Heart left ventricle (tissue), 16 donors: ENCODE measurements at regions of chr2 and their contacts with region 1.

Region 1: GRCh38 chr2:156400706-156401678 is 35.2 kb upstream of the GPD2 start:
- DNase-seq: peak; percentile 55 to 78 (median 72)
- ATAC-seq: peak; percentile 85 to 92 (median 90)
- H3K4me3 ChIP-seq: peak overlapping the region; percentile 66 to 93 (median 76)
- H3K27ac ChIP-seq: peak overlapping the region; percentile 80 to 97 (median 92)
- H3K4me1 ChIP-seq: peaks cover 0 to 25% (median 5%) of the 10 kb centered on the region in 12 donors
- H3K27me3 ChIP-seq: no peaks in the 10 kb centered on the region
- CTCF ChIP-seq: peak in 1 of 12 donors; percentile 1
- POLR2A ChIP-seq: no peak

Region 2: GRCh38 chr2:156192468-156192867 is 208.5 kb before region 1 on chr2:
- intact Hi-C with region 1: loop called in 1 of 10 experiments (anchors 10 kb)
- DNase-seq: no peak
- ATAC-seq: no peak
- H3K4me3 ChIP-seq: no peak overlapping the region
- H3K27ac ChIP-seq: no peak overlapping the region
- H3K4me1 ChIP-seq: peaks cover 0 to 4% (median 0%) of the 10 kb centered on the region in 12 donors
- H3K27me3 ChIP-seq: no peaks in the 10 kb centered on the region
- CTCF ChIP-seq: peak in 10 of 12 donors; percentile 10 to 48 (median 30)
- POLR2A ChIP-seq: no peak

Region 3: DNA sequence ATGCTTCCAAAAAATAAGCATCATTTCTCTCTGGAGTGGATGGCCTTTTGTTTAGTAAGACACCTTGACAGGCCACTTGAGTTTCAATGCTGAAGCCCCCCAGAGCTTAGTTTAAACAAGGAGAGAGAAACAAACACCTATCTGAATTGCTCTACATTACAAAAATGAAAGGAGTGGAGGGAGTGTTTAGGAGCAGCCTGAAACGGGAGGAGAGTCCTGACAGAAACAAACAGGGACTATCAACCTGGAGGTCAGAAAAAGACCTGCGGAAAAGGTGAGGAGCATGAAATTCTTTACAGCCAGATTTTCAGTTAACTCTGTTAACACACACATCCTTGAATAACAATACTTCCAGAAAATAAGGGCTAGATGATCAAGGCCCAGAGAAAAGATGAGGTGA is 194.6 kb before region 1 on chr2:
- intact Hi-C with region 1: loop called in 1 of 10 experiments (anchors 10 kb)
- DNase-seq: no peak
- ATAC-seq: no peak
- H3K4me3 ChIP-seq: no peak overlapping the region
- H3K27ac ChIP-seq: no peak overlapping the region
- H3K4me1 ChIP-seq: no peaks in the 10 kb centered on the region
- H3K27me3 ChIP-seq: no peaks in the 10 kb centered on the region
- CTCF ChIP-seq: no peak
- POLR2A ChIP-seq: no peak

Region 4: DNA sequence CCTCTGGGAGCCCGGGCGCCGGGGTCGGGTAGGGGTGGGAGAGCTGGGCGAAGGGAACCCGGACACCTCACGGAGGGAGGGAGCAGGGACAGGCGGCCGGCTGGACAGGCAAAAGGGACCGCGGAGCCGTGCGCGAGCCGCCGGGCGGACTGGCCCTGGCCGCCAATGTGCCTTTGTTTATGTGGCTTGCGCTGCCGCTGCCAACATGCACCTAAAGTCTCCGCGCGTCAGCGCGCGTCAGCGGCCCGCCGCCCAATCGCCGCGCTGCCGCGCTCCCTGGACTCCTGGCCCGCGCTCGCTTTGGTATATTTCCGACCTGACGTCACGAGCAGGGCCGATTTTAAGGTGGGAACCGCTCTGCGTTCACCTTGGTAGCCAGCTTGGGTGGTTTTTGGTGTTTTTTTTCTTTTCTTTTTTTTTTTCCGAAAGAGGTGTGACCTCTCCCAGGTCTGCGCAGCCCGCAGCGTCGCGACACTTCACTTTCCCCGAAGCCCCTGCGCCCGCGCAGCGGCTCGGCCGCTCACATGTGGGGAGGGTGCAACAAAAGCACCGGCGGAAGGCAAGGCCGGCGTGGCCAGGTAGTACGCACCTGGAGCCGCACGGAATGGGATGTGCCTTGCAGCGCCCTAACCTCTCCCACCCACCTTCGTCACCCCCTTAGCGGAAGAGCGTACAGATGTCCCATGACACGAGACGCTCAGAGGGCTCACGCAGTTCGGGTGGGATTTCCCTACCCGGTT is 68.3 kb before region 1 on chr2 and contains the start of gene NR4A2:
- intact Hi-C with region 1: loop called in 6 of 10 experiments (anchors 2 to 5 kb)
- DNase-seq: peak; percentile 91 to 93 (median 91)
- ATAC-seq: peak; percentile 62 to 81 (median 74)
- H3K4me3 ChIP-seq: peak within 1 kb of the TSS; percentile 44 to 87 (median 80)
- H3K27ac ChIP-seq: peak within 1 kb of the TSS; percentile 97 to 100 (median 99)
- H3K4me1 ChIP-seq: peaks cover 0 to 34% (median 7%) of the 10 kb centered on the region in 12 donors
- H3K27me3 ChIP-seq: peaks cover 0 to 29% (median 13%) of the 10 kb centered on the region in 9 donors
- CTCF ChIP-seq: no peak
- POLR2A ChIP-seq: peak; percentile 37 to 93
- total RNA-seq, gene NR4A2: 0.63 to 14.2 (median 1.1) TPM

Region 5: GRCh38 chr2:156341452-156342253 is 59.3 kb before region 1 on chr2:
- intact Hi-C with region 1: loop called (anchors 1 to 5 kb)
- DNase-seq: peak; percentile 93 to 95 (median 94)
- ATAC-seq: peak; percentile 88 to 91 (median 90)
- H3K4me3 ChIP-seq: peak overlapping the region; percentile 75 to 96 (median 90)
- H3K27ac ChIP-seq: peak overlapping the region; percentile 99 to 100 (median 100)
- H3K4me1 ChIP-seq: peaks cover 0 to 36% (median 16%) of the 10 kb centered on the region in 12 donors
- H3K27me3 ChIP-seq: no peaks in the 10 kb centered on the region
- CTCF ChIP-seq: no peak
- POLR2A ChIP-seq: peak in 1 of 2 donors; percentile 73

Region 6: GRCh38 chr2:156349605-156350004 is 51.4 kb before region 1 on chr2:
- intact Hi-C with region 1: loop called in 2 of 10 experiments (anchors 5 kb)
- DNase-seq: no peak
- ATAC-seq: no peak
- H3K4me3 ChIP-seq: no peak overlapping the region
- H3K27ac ChIP-seq: no peak overlapping the region
- H3K4me1 ChIP-seq: no peaks in the 10 kb centered on the region
- H3K27me3 ChIP-seq: no peaks in the 10 kb centered on the region
- CTCF ChIP-seq: no peak
- POLR2A ChIP-seq: no peak

Region 7: DNA sequence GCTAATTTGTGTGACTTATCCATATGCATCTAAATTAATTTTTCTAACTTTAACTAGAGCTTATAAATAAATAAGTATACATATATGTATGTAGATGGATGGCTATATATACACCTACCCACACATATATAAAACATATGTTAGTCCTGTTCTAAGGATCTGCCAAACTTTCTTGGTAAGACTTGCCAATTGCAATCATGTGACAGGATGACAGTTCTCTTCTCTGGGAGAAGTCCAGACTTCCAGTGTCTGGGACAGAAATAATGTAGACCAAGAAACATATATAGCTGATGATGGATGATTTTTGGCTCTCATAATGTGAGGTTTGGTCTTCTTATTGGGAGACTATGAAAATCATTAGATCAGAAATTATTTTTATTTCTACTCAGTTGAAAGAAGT is 37.9 kb before region 1 on chr2:
- intact Hi-C with region 1: no loop called
- DNase-seq: no peak
- ATAC-seq: no peak
- H3K4me3 ChIP-seq: no peak overlapping the region
- H3K27ac ChIP-seq: no peak overlapping the region
- H3K4me1 ChIP-seq: no peaks in the 10 kb centered on the region
- H3K27me3 ChIP-seq: no peaks in the 10 kb centered on the region
- CTCF ChIP-seq: no peak
- POLR2A ChIP-seq: no peak

Region 8: GRCh38 chr2:156512451-156512850 is 111.5 kb after region 1 on chr2:
- intact Hi-C with region 1: no loop called
- DNase-seq: no peak
- ATAC-seq: no peak
- H3K4me3 ChIP-seq: no peak overlapping the region
- H3K27ac ChIP-seq: no peak overlapping the region
- H3K4me1 ChIP-seq: peaks cover 0 to 6% (median 0%) of the 10 kb centered on the region in 12 donors
- H3K27me3 ChIP-seq: no peaks in the 10 kb centered on the region
- CTCF ChIP-seq: no peak
- POLR2A ChIP-seq: no peak